SK-N-SH (cell line): ENCODE measurements at regions of chr1 and their contacts with region 1.

Region 1: GRCh38 chr1:248622570-248623001 is 12.3 kb downstream of the OR2T11 start:
- DNase-seq: peak; percentile 35
- H3K4me3 ChIP-seq: no peak overlapping the region
- H3K27ac ChIP-seq: no peak overlapping the region
- H3K4me1 ChIP-seq: no peaks in the 10 kb centered on the region
- H3K27me3 ChIP-seq: peaks cover 4% of the 10 kb centered on the region; the same call in 1 of the 2 replicates
- CTCF ChIP-seq: peak; percentile 69
- EP300 ChIP-seq: no peak
- RAD21 ChIP-seq: peak; percentile 65

Region 2: DNA sequence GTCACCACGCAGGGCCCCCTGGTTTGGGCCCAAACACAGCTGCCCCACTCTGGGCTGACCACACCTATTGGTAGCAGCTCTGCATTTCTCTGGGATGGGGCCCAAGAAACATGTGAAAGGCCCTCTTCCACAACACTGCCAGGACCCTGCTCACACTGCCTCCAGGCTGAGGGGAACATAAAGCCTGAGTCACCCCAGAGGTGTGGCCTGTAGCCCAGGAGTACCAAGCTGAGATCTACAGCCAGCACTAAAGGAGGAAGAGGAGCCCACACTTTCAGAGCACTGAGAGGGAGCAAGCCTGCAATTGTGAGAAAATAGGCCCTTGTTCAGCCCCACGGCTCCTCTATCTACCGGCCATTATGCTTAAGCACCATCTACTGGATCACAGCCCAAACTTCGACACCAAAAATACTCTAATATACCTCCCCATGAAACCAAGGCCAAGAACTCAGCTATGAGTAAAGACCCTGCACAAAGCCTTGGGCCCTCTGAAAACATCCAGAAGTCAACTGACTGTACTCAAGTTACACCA is 10.6 kb before region 1 on chr1:
- CTCF ChIA-PET with region 1: interaction called, 11 read pairs
- POLR2A ChIA-PET with region 1: no interaction called
- DNase-seq: no peak
- H3K4me3 ChIP-seq: no peak overlapping the region
- H3K27ac ChIP-seq: no peak overlapping the region
- H3K4me1 ChIP-seq: no peaks in the 10 kb centered on the region
- H3K27me3 ChIP-seq: peaks cover 9% of the 10 kb centered on the region; the same call in 1 of the 2 replicates
- CTCF ChIP-seq: no peak
- EP300 ChIP-seq: no peak
- RAD21 ChIP-seq: no peak

Region 3: GRCh38 chr1:248841702-248842395 is 219.3 kb after region 1 on chr1:
- CTCF ChIA-PET with region 1: no interaction called
- POLR2A ChIA-PET with region 1: no interaction called
- DNase-seq: no peak
- H3K4me3 ChIP-seq: no peak overlapping the region
- H3K27ac ChIP-seq: peak overlapping the region; percentile 26 to 49
- H3K4me1 ChIP-seq: peaks cover 9 to 12% of the 10 kb centered on the region in 2 experiments; a peak in 3 of 4 replicates
- H3K27me3 ChIP-seq: no peaks in the 10 kb centered on the region
- CTCF ChIP-seq: peak; percentile 73
- EP300 ChIP-seq: no peak
- RAD21 ChIP-seq: peak; percentile 74